ENCODE measurements at regions of chr17 and their contacts with region 1.

Region 1: DNA sequence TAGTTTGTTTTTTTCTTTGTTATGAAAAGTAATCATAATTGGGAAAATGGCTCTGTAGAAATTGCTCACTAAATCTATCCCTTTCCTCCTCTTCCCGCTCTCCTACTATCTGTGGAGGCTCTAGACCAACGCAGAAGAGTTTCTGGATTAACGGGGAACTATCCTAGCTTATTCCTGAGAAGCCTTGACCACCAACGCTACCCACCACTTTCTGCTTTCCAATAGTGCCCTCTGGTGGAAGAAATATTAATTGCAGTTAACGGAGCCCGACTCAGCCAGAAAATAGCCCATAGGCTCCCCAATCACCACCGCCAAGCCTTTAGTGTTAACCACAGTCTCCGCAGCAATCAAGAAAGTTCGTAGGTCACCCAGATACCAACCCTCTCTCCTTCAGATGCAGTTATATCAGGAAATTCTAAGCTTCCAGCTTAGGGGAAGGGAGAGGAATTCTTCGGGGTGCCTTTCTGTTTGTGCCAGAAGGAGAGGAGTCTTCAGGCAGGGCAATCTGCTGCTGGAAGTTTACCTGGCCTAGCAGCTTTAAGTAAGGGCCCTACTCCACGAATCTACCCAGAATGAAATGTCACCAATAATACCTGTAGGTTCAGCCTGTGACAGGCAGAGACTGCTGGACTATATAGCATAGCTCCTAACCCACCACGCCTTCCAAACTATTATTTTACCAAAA is 23.0 kb upstream of the NSRP1 start:
- DNase-seq: peak; percentile 40
- H3K4me3 ChIP-seq: no peak overlapping the region
- H3K27ac ChIP-seq: no peak overlapping the region
- H3K4me1 ChIP-seq: no peaks in the 10 kb centered on the region
- H3K27me3 ChIP-seq: no peaks in the 10 kb centered on the region
- CTCF ChIP-seq: peak; percentile 79

Region 2: GRCh38 chr17:28239271-28239624 is 1854.4 kb before region 1 on chr17:
- intact Hi-C with region 1: no loop called
- DNase-seq: no peak
- H3K4me3 ChIP-seq: no peak overlapping the region
- H3K27ac ChIP-seq: no peak overlapping the region
- H3K4me1 ChIP-seq: no peaks in the 10 kb centered on the region
- H3K27me3 ChIP-seq: no peaks in the 10 kb centered on the region
- CTCF ChIP-seq: no peak

Region 3: DNA sequence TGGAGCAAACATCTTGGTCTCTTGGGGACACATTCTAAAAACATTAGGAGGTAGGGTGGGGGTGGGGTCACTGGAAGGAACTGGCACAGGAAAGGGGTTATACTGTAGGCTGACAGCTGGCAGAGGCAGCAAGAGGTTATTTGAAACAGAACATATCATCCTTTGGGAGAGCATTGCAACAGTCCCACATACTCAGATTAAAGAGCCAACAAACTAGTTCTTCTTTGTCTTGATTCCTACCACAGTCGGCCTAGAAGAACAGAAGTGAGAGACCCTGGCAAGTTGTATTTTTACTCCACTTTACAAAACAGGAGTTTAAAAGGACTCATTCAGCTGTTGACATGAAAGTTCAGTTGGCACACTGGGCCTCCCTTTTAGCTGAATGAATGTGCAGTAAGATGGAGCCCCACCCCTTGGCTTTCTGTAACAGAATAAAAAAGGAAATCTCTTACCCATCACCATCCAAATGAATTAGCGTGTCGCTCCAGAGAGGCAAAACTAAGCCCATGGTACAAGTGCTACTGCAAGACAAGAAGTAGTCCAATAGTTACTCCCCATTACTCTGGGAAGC is 416.3 kb before region 1 on chr17:
- intact Hi-C with region 1: no loop called
- DNase-seq: no peak
- H3K4me3 ChIP-seq: no peak overlapping the region
- H3K27ac ChIP-seq: no peak overlapping the region
- H3K4me1 ChIP-seq: no peaks in the 10 kb centered on the region
- H3K27me3 ChIP-seq: no peaks in the 10 kb centered on the region
- CTCF ChIP-seq: no peak

Region 4: DNA sequence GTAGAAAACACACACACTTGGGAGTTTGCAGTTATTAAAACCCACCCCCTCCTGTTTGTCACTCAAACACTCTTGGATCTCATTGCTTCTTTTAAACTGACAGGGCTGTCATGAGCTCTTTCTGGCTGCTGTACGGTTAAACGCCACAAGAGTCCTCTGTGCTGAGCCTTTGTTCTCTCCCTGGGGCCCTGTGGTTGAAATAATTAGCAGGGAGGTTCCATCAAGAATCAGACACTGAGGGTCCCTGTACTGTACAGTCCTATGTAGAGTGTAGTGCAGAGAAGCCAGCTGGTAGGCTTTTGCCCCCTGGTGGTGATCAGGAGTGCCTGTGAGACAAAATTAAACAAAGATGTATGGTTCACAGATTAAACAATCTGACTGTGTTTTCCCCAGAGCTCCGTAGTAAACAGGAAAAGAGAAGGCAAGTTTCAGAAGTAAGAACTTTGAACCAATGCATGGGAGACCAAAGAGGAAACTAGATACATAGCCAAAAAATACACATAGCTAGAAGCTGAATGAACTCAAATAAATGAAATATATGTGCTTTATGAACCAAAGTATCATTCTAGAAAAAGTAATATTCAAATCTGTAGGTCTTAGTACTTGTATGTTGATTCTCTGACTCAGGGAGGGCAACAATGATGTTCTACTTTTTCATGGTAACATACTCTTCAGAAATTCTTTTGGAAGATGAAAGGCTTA is 162.2 kb before region 1 on chr17:
- intact Hi-C with region 1: loop called (anchors 10 kb)
- DNase-seq: peak; percentile 75
- H3K4me3 ChIP-seq: peak overlapping the region; percentile 69
- H3K27ac ChIP-seq: peak overlapping the region; percentile 92
- H3K4me1 ChIP-seq: peaks cover 4% of the 10 kb centered on the region
- H3K27me3 ChIP-seq: no peaks in the 10 kb centered on the region
- CTCF ChIP-seq: peak; percentile 87

Region 5: DNA sequence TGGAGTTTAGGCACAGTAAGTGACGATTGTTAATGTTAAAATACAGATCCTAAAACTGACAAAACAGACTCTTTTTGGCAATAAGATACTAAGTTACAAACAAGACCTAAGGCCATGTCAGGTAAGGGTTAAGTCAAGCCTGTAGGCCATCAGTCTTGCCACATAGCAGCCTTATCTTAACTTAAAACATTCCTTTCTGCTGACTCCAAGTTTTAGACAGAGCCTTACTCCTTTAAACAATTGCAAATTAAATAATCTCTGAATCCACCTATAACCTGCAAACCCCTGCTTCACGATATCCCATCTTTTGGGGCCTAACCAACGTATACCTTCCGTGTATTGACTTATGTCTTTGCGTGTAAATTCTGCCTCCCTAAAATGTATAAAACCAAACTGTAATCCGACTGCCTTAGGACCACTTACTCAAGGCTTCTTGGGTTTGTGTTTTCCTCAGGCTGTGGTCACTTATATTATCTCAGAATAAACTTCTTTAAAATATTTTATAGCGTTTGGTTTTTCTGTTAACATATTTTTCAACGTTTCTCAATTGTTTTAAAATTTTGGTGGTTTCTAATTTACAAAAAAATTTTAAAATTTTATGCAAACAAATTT is 87.8 kb before region 1 on chr17:
- intact Hi-C with region 1: no loop called
- DNase-seq: no peak
- H3K4me3 ChIP-seq: no peak overlapping the region
- H3K27ac ChIP-seq: no peak overlapping the region
- H3K4me1 ChIP-seq: no peaks in the 10 kb centered on the region
- H3K27me3 ChIP-seq: no peaks in the 10 kb centered on the region
- CTCF ChIP-seq: no peak

Region 6: DNA sequence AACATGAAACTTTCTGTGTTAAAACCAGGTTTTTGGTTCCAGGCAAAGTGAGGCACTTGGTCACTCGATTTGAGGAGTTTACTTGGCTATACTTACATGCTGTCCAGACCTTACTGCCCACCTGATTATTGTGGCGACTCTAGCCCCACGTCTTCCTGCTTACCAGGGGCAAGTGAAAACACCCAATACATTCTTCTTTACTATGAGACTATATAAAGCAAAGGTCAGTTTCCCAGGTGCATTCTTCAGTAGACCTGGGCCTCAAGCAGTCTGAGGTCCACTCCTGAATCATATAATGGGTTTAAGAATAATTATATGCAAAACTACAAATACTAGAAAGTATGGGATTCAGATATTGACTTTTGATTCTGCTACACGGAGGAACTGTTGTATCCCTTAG is 65.9 kb before region 1 on chr17:
- intact Hi-C with region 1: loop called (anchors 2 kb)
- DNase-seq: no peak
- H3K4me3 ChIP-seq: no peak overlapping the region
- H3K27ac ChIP-seq: no peak overlapping the region
- H3K4me1 ChIP-seq: no peaks in the 10 kb centered on the region
- H3K27me3 ChIP-seq: no peaks in the 10 kb centered on the region
- CTCF ChIP-seq: no peak

Measured in colonic mucosa (tissue), 4 donors.